IMR-90 (cell line): ENCODE measurements at regions of chr14 and their contacts with region 1.

Region 1: DNA sequence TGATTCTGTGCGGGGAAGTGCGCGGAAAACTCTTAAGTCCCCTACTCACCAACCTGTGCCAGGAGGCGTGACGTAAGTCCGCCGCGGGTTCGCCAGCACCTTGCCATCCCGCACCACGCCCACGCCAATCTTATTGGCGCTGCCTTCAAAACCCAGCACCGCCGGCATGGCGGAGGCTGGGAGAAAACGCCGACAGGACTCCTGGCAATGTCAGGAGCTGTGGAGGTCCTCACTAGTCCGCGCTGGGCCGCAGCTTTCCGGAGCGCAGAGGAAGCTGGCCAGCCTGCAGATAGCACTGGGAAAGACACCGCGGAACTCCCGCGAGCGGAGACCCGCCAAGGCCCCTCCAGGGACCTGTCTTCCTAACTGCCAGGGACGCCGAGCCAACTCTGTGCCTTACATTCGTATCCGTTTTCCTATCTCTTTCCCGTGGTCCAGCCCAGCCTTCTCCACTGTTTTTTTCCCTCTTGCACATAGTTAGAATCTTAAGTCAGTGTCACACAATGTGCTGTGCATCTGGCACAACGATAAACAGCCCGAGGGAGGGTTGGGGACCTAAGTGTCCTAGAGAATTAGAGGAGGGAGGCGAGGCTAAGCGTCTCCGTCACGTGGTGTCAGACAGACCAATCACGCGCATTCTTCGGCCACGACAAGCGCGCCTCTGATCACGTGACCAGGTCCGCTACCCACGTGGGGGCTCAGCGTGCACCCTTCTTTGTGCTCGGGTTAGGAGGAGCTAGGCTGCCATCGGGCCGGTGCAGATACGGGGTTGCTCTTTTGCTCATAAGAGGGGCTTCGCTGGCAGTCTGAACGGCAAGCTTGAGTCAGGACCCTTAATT is at the starts of genes APEX1 and OSGEP:
- DNase-seq: peak; percentile 99
- ATAC-seq: peak; percentile 90
- H3K4me3 ChIP-seq: peak within 1 kb of the TSS; percentile 62
- H3K27ac ChIP-seq: peak within 1 kb of the TSS; percentile 80
- H3K4me1 ChIP-seq: no peaks in the 10 kb centered on the region
- H3K27me3 ChIP-seq: no peaks in the 10 kb centered on the region
- CTCF ChIP-seq: no peak
- POLR2A ChIP-seq: peak; percentile 87
- RAD21 ChIP-seq: no peak
- total RNA-seq, gene APEX1: 125 and 141 TPM in 2 replicates
- total RNA-seq, gene OSGEP: 32.4 and 38.0 TPM in 2 replicates

Region 2: DNA sequence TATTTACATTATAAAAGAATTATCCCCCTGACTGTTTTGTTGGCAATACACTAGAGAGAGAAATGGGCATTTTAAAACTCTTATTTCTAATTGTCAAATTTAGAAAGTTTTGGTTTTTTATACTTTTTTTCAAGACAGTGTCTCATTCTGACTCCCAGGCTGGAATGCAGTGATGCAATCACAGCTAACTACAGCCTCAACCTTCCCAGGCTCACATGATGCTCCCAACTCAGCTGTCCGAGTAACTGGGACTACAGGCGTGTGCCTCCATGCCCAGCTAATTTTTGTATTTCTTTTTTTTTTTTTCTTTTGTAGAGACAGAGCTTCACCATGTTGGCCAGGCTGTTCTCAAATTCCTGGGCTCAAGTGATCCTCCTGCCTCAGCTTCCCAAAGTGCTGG is 239.5 kb before region 1 on chr14:
- CTCF ChIA-PET with region 1: no interaction called
- POLR2A ChIA-PET with region 1: no interaction called
- dilution Hi-C with region 1: no loop called
- in situ Hi-C with region 1: no loop called
- intact Hi-C with region 1: no loop called
- DNase-seq: no peak
- ATAC-seq: no peak
- H3K4me3 ChIP-seq: no peak overlapping the region
- H3K27ac ChIP-seq: no peak overlapping the region
- H3K4me1 ChIP-seq: no peaks in the 10 kb centered on the region
- H3K27me3 ChIP-seq: no peaks in the 10 kb centered on the region
- CTCF ChIP-seq: no peak
- POLR2A ChIP-seq: no peak
- RAD21 ChIP-seq: no peak

Region 3: DNA sequence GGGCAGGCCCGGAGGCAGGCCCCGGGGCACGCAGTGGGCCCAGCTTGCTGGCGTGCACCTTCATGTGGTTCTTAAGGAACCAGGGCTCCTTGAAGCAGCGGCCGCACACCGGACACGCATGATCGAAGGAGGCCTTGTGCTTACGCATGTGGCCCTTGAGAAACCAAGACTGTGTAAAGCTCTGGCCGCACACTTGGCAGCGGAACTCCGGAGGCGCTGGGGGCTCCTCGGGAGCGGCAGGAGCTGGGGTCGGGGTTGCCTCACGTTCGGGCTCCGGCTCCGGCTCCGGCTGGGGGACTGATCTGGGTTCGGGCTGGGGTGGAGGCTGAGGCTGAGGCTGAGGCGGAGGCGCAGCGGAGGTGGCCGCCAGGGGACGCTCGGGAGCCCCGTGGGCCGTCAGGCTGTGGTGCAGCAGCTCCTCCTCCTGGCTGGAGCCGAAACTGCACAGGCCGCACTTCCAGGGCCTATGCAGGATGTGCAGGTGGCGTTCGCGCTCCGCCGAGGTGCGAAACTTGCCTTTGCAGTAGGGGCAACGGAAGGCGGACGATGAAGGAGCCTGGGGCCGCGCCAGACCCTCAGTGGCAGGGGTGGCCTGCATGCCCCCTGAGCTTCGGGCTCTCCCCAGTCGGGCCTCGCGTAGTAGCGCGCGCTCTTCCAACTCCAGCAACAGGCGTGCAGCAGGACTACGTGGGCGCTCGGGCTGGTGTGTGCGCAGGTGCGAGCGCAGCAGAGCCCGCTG is 637.7 kb after region 1 on chr14:
- CTCF ChIA-PET with region 1: no interaction called
- POLR2A ChIA-PET with region 1: no interaction called
- dilution Hi-C with region 1: no loop called
- in situ Hi-C with region 1: loop called (anchors 25 kb)
- intact Hi-C with region 1: no loop called
- DNase-seq: peak; percentile 67
- ATAC-seq: peak; percentile 85
- H3K4me3 ChIP-seq: no peak overlapping the region
- H3K27ac ChIP-seq: no peak overlapping the region
- H3K4me1 ChIP-seq: peaks cover 5% of the 10 kb centered on the region
- H3K27me3 ChIP-seq: no peaks in the 10 kb centered on the region
- CTCF ChIP-seq: peak; percentile 100; the same call in 1 of the 2 replicates
- POLR2A ChIP-seq: peak; percentile 65; the same call in 1 of the 2 replicates
- RAD21 ChIP-seq: peak; percentile 100